Prostate gland (tissue), 2 donors: ENCODE measurements at regions of chr5 and their contacts with region 1.

Region 1: GRCh38 chr5:82312373-82312856 is 34.3 kb upstream of the RPS23 start:
- DNase-seq: no peak
- H3K4me3 ChIP-seq: no peak overlapping the region
- H3K27ac ChIP-seq: no peak overlapping the region
- H3K4me1 ChIP-seq: no peaks in the 10 kb centered on the region
- H3K27me3 ChIP-seq: no peaks in the 10 kb centered on the region
- CTCF ChIP-seq: peak in 3 of 4 experiments; percentile 19 to 43 (median 36)
- POLR2A ChIP-seq: no peak

Region 2: GRCh38 chr5:82074950-82075349 is 237.5 kb before region 1 on chr5:
- intact Hi-C with region 1: no loop called
- DNase-seq: no peak
- H3K4me3 ChIP-seq: no peak overlapping the region
- H3K27ac ChIP-seq: no peak overlapping the region
- H3K4me1 ChIP-seq: no peaks in the 10 kb centered on the region
- H3K27me3 ChIP-seq: no peaks in the 10 kb centered on the region
- CTCF ChIP-seq: no peak
- POLR2A ChIP-seq: no peak

Region 3: DNA sequence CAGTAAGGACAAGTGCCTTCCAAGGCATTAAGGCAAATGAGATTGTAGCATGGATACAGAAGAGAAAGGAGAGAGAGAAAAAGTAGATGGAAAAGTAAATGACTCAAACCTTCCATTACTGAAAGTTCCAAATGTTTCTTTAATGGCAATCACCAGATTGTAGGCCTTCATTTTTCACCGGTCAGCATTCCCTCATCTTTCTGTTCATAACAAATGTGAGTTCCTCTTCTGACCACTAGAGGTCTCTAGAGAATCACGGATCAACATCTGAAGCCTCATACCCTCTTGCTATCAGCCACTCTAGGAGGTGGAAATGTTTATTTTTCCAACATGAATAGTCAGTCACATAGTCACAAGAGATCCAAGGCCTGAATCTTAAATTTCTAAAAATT is 39.3 kb after region 1 on chr5:
- intact Hi-C with region 1: loop called (anchors 5 kb)
- DNase-seq: peak; percentile 26
- H3K4me3 ChIP-seq: no peak overlapping the region
- H3K27ac ChIP-seq: no peak overlapping the region
- H3K4me1 ChIP-seq: no peaks in the 10 kb centered on the region
- H3K27me3 ChIP-seq: no peaks in the 10 kb centered on the region
- CTCF ChIP-seq: peak; percentile 45 to 90 (median 75)
- POLR2A ChIP-seq: no peak

Region 4: DNA sequence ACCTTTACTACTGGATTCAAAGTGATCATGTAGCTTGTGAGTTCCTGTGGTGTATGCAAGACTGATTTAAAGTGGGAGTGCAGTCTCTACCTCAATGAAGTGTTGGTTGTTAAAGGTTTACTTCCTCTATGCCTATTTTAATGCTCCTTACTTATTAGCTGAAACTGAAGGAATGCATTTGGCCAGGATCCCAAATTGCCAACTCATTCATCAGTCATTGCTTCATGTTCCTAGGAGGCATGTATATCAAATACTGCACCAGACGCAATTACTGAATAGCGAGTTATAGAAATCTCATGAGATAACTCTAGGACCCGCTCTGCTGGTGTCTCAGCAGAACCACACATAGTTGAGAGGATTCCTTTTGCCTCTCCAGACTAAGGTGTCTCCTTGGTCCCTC is 108.7 kb after region 1 on chr5:
- intact Hi-C with region 1: no loop called
- DNase-seq: no peak
- H3K4me3 ChIP-seq: no peak overlapping the region
- H3K27ac ChIP-seq: no peak overlapping the region
- H3K4me1 ChIP-seq: no peaks in the 10 kb centered on the region
- H3K27me3 ChIP-seq: no peaks in the 10 kb centered on the region
- CTCF ChIP-seq: no peak
- POLR2A ChIP-seq: no peak

Region 5: GRCh38 chr5:83340511-83340918 is 1028.1 kb after region 1 on chr5:
- intact Hi-C with region 1: no loop called
- DNase-seq: no peak
- H3K4me3 ChIP-seq: no peak overlapping the region
- H3K27ac ChIP-seq: no peak overlapping the region
- H3K4me1 ChIP-seq: no peaks in the 10 kb centered on the region
- H3K27me3 ChIP-seq: no peaks in the 10 kb centered on the region
- CTCF ChIP-seq: no peak
- POLR2A ChIP-seq: no peak